CD14-positive monocyte (primary cell): ENCODE measurements at regions of chr2 and their contacts with region 1.

Region 1: DNA sequence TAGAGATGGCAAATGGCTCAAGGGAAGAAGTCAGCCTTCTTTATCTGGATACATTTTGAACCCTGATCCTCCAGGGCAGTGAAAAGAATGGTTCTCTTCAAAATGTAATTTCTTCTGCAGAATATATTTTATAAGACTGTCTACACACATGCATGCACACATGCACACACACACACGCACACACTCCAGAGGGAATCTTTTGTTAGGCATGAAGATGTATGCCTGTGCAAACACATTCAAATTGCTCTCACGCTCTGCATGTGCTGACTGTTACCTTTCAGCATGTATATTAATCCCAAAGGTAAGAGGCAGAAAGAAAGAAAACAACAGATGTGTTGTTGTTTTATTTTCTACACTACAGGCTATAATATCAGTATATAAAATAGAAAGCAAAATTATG is 43.2 kb downstream of the SLC5A7 start:
- DNase-seq: no peak
- H3K4me3 ChIP-seq: no peak overlapping the region
- H3K4me3 Mint-ChIP-seq: no peak overlapping the region
- H3K27ac ChIP-seq: no peak overlapping the region
- H3K27ac Mint-ChIP-seq: no peak overlapping the region
- H3K4me1 ChIP-seq: no peaks in the 10 kb centered on the region
- H3K4me1 Mint-ChIP-seq: no peaks in the 10 kb centered on the region
- H3K27me3 ChIP-seq: no peaks in the 10 kb centered on the region
- H3K27me3 Mint-ChIP-seq: peaks cover 0 to 3% (median 1%) of the 10 kb centered on the region in 3 donors
- CTCF ChIP-seq: no peak

Region 2: GRCh38 chr2:107772353-107772752 is 257.1 kb before region 1 on chr2:
- intact Hi-C with region 1: loop called in 1 of 2 experiments (anchors 10 kb)
- DNase-seq: no peak
- H3K4me3 ChIP-seq: no peak overlapping the region
- H3K4me3 Mint-ChIP-seq: no peak overlapping the region
- H3K27ac ChIP-seq: no peak overlapping the region
- H3K27ac Mint-ChIP-seq: no peak overlapping the region
- H3K4me1 ChIP-seq: no peaks in the 10 kb centered on the region
- H3K4me1 Mint-ChIP-seq: no peaks in the 10 kb centered on the region
- H3K27me3 ChIP-seq: no peaks in the 10 kb centered on the region
- H3K27me3 Mint-ChIP-seq: peaks cover 0 to 1% (median 0%) of the 10 kb centered on the region in 3 donors
- CTCF ChIP-seq: no peak

Region 3: DNA sequence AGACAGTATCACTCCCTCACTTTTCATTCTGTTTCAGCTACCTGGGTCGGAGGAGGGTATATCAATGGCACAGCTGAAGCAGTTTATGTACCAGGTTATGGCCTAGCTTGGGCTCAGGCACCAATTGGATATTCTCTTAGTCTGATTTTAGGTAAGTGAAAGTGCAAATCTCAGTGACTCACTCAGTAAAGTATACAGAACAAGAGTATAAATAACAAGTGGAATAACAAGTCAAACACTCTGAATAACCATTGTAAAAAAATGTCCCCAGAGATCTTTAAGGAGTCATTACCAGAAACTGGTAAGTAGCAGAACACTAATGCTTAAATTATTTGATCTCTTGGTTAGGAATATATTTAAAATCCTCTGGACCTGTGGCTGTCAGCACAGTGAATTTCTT is 37.4 kb before region 1 on chr2:
- intact Hi-C with region 1: no loop called
- DNase-seq: no peak
- H3K4me3 ChIP-seq: no peak overlapping the region
- H3K4me3 Mint-ChIP-seq: no peak overlapping the region
- H3K27ac ChIP-seq: no peak overlapping the region
- H3K27ac Mint-ChIP-seq: no peak overlapping the region
- H3K4me1 ChIP-seq: no peaks in the 10 kb centered on the region
- H3K4me1 Mint-ChIP-seq: no peaks in the 10 kb centered on the region
- H3K27me3 ChIP-seq: peaks cover 7 to 12% of the 10 kb centered on the region in 2 donors
- H3K27me3 Mint-ChIP-seq: peaks cover 11 to 14% (median 13%) of the 10 kb centered on the region in 3 donors
- CTCF ChIP-seq: no peak

Region 4: GRCh38 chr2:108184419-108184818 is 154.9 kb after region 1 on chr2:
- intact Hi-C with region 1: no loop called
- DNase-seq: no peak
- H3K4me3 ChIP-seq: no peak overlapping the region
- H3K4me3 Mint-ChIP-seq: no peak overlapping the region
- H3K27ac ChIP-seq: no peak overlapping the region
- H3K27ac Mint-ChIP-seq: no peak overlapping the region
- H3K4me1 ChIP-seq: no peaks in the 10 kb centered on the region
- H3K4me1 Mint-ChIP-seq: no peaks in the 10 kb centered on the region
- H3K27me3 ChIP-seq: no peaks in the 10 kb centered on the region
- H3K27me3 Mint-ChIP-seq: peaks cover 2 to 5% (median 2%) of the 10 kb centered on the region in 3 donors
- CTCF ChIP-seq: peak; percentile 17

Region 5: DNA sequence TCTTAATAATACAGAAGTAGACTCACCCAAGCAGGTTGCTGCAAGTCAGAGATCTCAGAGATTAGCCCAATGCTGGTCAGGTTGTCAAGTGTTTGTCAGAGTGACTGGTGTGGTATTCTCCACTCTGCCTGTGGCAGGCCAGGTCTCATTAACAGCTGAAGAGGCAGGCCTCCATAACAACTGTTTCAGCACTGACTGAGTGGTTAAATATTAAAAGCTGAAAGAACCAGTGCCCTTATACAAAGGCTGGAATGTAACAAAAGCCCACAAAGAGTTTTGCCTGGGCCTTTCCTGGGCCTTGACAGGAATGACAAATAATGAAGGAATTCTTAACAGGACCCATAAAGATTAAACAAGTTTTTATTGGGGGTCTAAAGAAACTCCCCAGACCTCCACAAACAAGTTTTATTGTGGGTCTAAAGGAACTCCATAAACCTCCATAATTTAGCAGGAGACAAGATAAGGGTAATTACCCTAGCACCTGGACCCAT is 286.0 kb after region 1 on chr2:
- intact Hi-C with region 1: no loop called
- DNase-seq: no peak
- H3K4me3 ChIP-seq: no peak overlapping the region
- H3K4me3 Mint-ChIP-seq: no peak overlapping the region
- H3K27ac ChIP-seq: no peak overlapping the region
- H3K27ac Mint-ChIP-seq: no peak overlapping the region
- H3K4me1 ChIP-seq: no peaks in the 10 kb centered on the region
- H3K4me1 Mint-ChIP-seq: no peaks in the 10 kb centered on the region
- H3K27me3 ChIP-seq: no peaks in the 10 kb centered on the region
- H3K27me3 Mint-ChIP-seq: peaks cover 0 to 3% (median 0%) of the 10 kb centered on the region in 3 donors
- CTCF ChIP-seq: no peak